ENCODE measurements at regions of chr19 and their contacts with region 1.

Region 1: GRCh38 chr19:5827891-5828660 is 11.4 kb downstream of the FUT6 start:
- DNase-seq: peak; percentile 89 to 93
- ATAC-seq: peak; percentile 73 to 81
- H3K4me3 ChIP-seq: peak overlapping the region; percentile 64
- H3K27ac ChIP-seq: peak overlapping the region; percentile 91 to 98
- H3K4me1 ChIP-seq: peaks cover 19% of the 10 kb centered on the region
- CTCF ChIP-seq: no peak
- EP300 ChIP-seq: no peak
- POLR2A ChIP-seq: peak; percentile 96
- RAD21 ChIP-seq: no peak

Region 2: DNA sequence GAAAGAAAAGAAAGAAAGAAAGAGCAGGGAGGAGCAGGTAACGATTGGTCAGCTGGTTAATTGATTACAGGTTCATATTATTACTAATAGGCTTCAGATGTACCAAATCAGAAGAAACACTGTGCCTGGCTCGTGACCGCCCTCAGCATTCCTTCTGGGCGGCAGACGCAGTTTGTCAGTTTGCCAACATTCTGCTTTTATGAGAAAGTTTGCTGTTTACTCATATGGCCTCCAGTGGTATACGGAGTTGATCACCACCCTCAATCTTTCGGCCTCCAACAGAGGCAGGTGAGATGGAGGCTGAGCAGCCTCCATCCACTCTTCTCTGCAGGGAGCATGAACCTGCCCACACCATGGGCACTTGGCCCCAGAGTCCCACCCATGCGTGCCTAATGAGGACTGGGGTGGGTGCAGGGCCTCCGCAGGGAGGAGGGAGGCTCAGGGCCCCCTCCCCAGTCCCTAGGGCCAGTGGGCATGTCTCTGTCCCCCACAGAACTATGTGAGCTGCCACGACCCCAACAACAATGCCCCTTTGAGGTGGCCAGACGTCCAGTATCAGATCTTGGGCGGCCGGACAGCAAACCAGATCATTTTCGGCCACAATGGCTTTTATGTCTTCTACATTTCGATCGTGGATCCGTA is 52.3 kb before region 1 on chr19:
- CTCF ChIA-PET with region 1: interaction called, 11 read pairs
- POLR2A ChIA-PET with region 1: no interaction called
- DNase-seq: peak in 1 of 2 experiments; percentile 37
- ATAC-seq: peak; percentile 18 to 49; a peak in 1 of 6 replicates
- H3K4me3 ChIP-seq: no peak overlapping the region
- H3K27ac ChIP-seq: no peak overlapping the region; a peak in 1 of 6 replicates
- H3K4me1 ChIP-seq: peaks cover 5% of the 10 kb centered on the region; the same call in 1 of the 3 replicates
- CTCF ChIP-seq: no peak
- EP300 ChIP-seq: no peak
- POLR2A ChIP-seq: no peak
- RAD21 ChIP-seq: no peak

Region 3: GRCh38 chr19:5814852-5815246 is 13.2 kb before region 1 on chr19:
- CTCF ChIA-PET with region 1: interaction called, 15 read pairs
- POLR2A ChIA-PET with region 1: interaction called, 4 read pairs
- DNase-seq: no peak
- ATAC-seq: peak; percentile 44 to 59; a peak in 5 of 6 replicates
- H3K4me3 ChIP-seq: no peak overlapping the region
- H3K27ac ChIP-seq: no peak overlapping the region
- H3K4me1 ChIP-seq: no peaks in the 10 kb centered on the region
- CTCF ChIP-seq: no peak
- EP300 ChIP-seq: no peak
- POLR2A ChIP-seq: no peak
- RAD21 ChIP-seq: no peak

Region 4: DNA sequence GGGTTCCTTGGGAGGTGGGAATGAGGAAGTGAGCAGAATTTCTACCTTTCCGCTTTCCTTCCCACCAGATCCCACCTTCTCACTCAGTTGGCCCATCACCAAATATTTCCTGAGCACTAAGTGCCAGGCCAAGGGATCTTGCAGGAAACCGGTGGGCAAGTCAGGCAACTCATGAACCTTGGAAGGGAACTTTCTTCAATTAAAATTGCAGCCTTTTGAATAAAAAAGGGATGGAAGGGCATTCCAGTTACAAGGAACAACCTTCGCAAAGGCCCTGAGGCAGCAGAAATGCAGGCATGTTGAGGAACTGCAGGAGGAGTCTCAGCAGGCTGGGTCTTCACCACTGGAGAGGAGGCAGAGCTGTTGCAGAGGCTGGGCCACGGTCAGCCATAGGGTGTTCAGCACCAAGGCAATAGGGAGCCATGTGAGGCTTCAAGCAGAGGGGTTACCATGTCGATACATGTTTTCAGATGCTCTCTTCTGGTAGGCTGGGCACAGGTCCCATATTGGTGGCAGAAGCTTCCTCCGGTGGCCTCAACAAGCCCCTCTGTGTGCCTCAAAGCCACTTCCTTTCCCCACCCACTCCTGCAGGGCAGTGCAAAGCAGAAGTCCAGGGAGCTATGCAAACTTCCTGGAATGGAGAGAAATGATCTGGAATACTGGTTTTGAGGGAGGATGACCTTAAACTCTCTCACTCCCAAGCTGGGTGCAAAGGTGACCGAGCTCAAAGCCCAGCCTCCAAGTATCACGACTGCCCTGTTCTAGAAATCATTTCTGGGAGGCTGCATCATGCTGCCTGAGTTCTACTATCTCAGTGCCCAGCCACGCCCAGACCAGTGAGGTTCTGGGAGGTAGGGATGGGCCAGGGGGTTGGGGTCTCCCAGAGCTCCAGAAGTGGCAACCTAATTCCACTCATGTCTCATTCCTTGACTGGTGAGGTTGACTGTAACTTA is 11.3 kb after region 1 on chr19 and contains the start of gene FUT6:
- CTCF ChIA-PET with region 1: no interaction called
- POLR2A ChIA-PET with region 1: interaction called, 22 read pairs
- DNase-seq: no peak
- ATAC-seq: peak; percentile 44 to 51; a peak in 2 of 6 replicates
- H3K4me3 ChIP-seq: no peak within 1 kb of the TSS
- H3K27ac ChIP-seq: peak within 1 kb of the TSS in 1 of 2 experiments; percentile 49; a peak in 1 of 6 replicates
- H3K4me1 ChIP-seq: peaks cover 18% of the 10 kb centered on the region
- CTCF ChIP-seq: no peak
- EP300 ChIP-seq: no peak
- POLR2A ChIP-seq: no peak
- RAD21 ChIP-seq: no peak
- polyA plus RNA-seq, gene FUT6: 0.12 TPM in 1 of 2 replicates, not detected in the other

Region 5: DNA sequence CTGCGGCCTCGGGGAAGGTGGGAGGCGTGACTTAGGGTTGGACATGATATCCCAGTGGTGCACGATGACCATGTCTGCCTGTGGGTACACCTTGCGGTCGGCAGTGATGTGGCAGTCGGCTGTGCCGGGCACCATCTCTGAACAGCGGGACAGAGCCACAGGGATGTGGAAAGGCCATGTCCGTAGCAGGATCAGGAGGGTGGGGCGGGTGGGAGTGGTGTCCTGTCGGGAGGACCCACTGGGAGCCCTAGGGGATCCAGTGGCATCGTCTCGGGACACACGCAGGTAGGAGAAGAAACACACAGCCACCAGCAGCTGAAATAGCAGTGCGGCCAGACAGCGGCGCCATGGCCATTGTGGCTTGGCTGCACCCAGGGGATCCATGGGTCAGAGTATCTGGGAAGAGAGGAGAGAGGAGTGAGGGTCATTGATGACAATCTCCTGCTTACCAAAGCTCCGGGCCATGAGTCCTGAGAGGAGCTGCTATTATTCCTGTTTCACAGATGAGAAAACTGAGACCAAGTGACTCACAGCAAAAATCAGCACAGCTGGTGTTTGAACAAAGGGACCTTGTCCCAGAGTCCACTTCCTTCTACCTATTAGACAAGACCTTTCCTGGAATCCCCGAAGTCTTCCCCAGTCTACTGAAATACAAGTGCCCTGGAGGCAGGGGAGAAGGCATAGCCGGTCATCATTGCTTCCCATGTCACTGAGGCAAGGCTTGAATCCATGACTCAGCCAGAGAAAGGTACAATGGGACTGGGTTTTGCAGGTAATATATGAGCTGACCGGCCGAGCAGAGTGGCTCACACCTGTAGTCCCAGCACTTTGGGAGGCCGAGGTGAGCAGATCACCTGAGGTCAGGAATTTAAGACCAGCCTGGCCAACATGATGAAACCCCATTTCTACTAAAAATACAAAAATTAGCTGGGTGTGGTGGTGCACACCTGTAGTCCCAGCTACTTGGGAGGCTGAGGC is 16.7 kb after region 1 on chr19:
- CTCF ChIA-PET with region 1: no interaction called
- POLR2A ChIA-PET with region 1: interaction called, 22 read pairs
- DNase-seq: no peak
- ATAC-seq: no peak
- H3K4me3 ChIP-seq: no peak overlapping the region
- H3K27ac ChIP-seq: no peak overlapping the region
- H3K4me1 ChIP-seq: peaks cover 5% of the 10 kb centered on the region; the same call in 2 of the 3 replicates
- CTCF ChIP-seq: no peak
- EP300 ChIP-seq: no peak
- POLR2A ChIP-seq: no peak
- RAD21 ChIP-seq: no peak

Region 6: GRCh38 chr19:5891938-5892771 is 64.1 kb after region 1 on chr19:
- CTCF ChIA-PET with region 1: interaction called, 10 read pairs
- POLR2A ChIA-PET with region 1: interaction called, 11 read pairs
- DNase-seq: peak; percentile 33 to 46
- ATAC-seq: peak; percentile 69 to 89
- H3K4me3 ChIP-seq: no peak overlapping the region
- H3K27ac ChIP-seq: peak overlapping the region in 1 of 2 experiments; percentile 50; a peak in 2 of 6 replicates
- H3K4me1 ChIP-seq: 0 out of 3 replicates have a peak, but pooled peaks cover 3% of the 10 kb centered on the region
- CTCF ChIP-seq: peak; percentile 64
- EP300 ChIP-seq: no peak
- POLR2A ChIP-seq: no peak
- RAD21 ChIP-seq: peak; percentile 72 to 80

Region 7: DNA sequence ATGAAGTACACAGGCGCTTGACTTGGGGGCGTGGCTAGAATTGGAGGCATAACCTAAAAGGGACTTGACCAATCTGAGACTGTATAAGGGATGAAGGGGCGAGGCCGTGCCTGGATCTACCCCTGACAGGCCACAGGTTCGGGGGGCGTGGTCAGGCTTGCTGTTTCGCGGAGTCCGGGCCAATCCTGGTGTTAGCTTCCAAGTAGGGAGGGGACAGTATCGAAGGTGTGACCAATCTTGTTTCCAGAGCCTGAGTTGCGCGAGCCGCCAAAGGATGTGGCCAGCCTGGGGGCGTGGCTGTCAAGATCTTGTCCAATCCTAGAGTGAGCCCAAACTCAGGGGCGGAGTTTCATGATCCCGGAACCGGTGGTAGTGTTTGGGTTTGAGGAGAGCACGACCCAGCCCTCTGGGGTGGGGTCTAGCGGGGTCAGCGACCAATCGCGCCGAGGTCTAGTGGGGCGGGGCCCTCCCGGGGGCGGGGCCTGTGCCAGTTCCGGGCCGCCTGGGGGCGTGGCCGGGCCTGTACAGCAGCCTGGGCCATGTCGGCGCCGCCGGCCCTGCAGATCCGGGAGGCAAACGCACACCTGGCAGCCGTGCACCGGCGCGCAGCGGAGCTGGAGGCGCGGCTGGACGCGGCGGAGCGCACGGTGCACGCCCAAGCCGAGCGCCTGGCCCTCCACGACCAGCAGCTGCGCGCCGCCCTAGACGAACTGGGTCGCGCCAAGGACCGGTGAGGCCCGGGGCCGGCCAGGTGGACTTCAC is 76.5 kb after region 1 on chr19 and contains the start of gene VMAC:
- CTCF ChIA-PET with region 1: interaction called, 3 read pairs
- POLR2A ChIA-PET with region 1: interaction called, 42 read pairs
- DNase-seq: peak; percentile 89 to 100
- ATAC-seq: peak; percentile 83 to 87
- H3K4me3 ChIP-seq: peak within 1 kb of the TSS; percentile 99
- H3K27ac ChIP-seq: peak within 1 kb of the TSS; percentile 95 to 98
- H3K4me1 ChIP-seq: peaks cover 5% of the 10 kb centered on the region; the same call in 1 of the 3 replicates
- CTCF ChIP-seq: no peak
- EP300 ChIP-seq: no peak
- POLR2A ChIP-seq: peak; percentile 47; the same call in 1 of the 2 replicates
- RAD21 ChIP-seq: no peak
- polyA plus RNA-seq, gene VMAC: 1.1 and 1.5 TPM in 2 replicates